ENCODE measurements at regions of chr22 and their contacts with region 1.

Region 1: GRCh38 chr22:35349704-35350538 is 31.0 kb upstream of the HMOX1 start:
- DNase-seq: no peak
- H3K4me3 ChIP-seq: peak overlapping the region in 1 of 4 donors; percentile 72
- H3K27ac ChIP-seq: peak overlapping the region; percentile 61 to 86 (median 72)
- H3K4me1 ChIP-seq: peaks cover 18 to 42% (median 27%) of the 10 kb centered on the region in 3 donors
- H3K27me3 ChIP-seq: no peaks in the 10 kb centered on the region
- CTCF ChIP-seq: no peak
- POLR2A ChIP-seq: no peak

Region 2: DNA sequence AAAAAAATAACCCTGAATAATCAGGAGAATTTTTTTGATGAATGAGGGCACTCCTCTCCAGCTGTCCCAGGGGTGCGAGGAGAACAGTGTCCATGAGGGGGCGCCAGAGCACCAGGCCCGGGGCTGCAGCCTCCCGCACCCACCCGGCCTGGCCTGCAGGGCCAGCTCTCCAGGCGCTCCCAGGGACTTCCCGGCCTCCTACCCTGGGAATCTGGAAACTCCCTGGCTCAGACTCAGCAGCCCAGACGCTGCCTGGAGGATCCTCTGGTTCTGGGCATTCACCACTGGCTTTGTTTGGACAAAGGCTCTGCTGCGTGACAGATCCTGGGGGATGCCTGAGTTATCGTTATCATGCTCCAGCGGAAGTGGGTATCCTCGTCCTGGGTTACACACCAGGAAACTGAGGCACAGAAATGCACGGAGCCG is 81.0 kb after region 1 on chr22:
- intact Hi-C with region 1: loop called (anchors 10 kb)
- DNase-seq: no peak
- H3K4me3 ChIP-seq: peak overlapping the region in 1 of 4 donors; percentile 19
- H3K27ac ChIP-seq: peak overlapping the region; percentile 18 to 44 (median 28)
- H3K4me1 ChIP-seq: peaks cover 0 to 15% (median 4%) of the 10 kb centered on the region in 3 donors
- H3K27me3 ChIP-seq: no peaks in the 10 kb centered on the region
- CTCF ChIP-seq: peak; percentile 79 to 99 (median 97)
- POLR2A ChIP-seq: no peak

Region 3: GRCh38 chr22:35467681-35468434 is 117.9 kb after region 1 on chr22:
- intact Hi-C with region 1: no loop called
- DNase-seq: no peak
- H3K4me3 ChIP-seq: no peak overlapping the region
- H3K27ac ChIP-seq: peak overlapping the region; percentile 47 to 80 (median 72)
- H3K4me1 ChIP-seq: peaks cover 12 to 24% (median 16%) of the 10 kb centered on the region in 3 donors
- H3K27me3 ChIP-seq: no peaks in the 10 kb centered on the region
- CTCF ChIP-seq: no peak
- POLR2A ChIP-seq: no peak

Region 4: DNA sequence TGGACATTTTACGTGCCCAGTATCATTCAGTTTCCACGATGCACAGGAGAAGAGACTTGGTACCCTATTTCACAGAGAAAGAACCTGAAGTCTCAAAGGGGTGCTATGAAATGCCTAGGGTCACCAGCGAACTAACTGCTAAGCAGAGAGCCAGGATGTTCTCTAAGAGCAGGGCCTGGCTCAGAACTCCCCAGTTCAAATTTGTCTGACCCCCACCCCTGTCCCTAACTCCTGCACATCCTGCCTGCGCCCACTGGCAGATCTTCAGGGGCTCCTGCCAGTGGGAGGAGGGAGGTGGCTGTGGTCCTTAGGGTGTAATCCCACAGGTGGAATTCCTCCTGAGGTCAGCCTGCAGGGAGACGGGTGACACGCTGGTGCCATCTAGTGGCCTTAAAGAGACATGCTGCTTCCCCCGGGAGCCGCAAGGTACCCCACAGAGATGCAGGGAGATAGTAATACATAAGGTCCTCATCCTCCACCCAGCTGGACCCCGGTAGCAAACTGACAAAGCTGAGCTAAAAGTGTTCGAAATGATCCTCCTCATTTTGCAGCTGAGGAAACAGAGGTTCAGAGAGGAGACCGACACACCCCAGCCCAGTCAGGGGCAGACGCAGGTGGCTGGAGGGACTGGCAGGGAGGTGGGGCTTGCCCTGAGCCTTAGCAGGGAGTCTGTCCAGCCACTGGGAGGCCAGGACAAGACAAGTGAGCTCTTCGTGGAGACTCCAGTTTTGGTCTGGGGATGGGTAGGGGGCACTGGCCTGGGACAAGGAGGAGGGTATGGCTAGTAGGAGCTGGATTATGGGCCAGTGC is 233.1 kb after region 1 on chr22:
- intact Hi-C with region 1: loop called (anchors 10 kb)
- DNase-seq: no peak
- H3K4me3 ChIP-seq: no peak overlapping the region
- H3K27ac ChIP-seq: peak overlapping the region in 2 of 4 donors; percentile 3 to 44
- H3K4me1 ChIP-seq: peaks cover 0 to 10% (median 8%) of the 10 kb centered on the region in 3 donors
- H3K27me3 ChIP-seq: no peaks in the 10 kb centered on the region
- CTCF ChIP-seq: peak; percentile 80 to 94 (median 88)
- POLR2A ChIP-seq: no peak

Region 5: DNA sequence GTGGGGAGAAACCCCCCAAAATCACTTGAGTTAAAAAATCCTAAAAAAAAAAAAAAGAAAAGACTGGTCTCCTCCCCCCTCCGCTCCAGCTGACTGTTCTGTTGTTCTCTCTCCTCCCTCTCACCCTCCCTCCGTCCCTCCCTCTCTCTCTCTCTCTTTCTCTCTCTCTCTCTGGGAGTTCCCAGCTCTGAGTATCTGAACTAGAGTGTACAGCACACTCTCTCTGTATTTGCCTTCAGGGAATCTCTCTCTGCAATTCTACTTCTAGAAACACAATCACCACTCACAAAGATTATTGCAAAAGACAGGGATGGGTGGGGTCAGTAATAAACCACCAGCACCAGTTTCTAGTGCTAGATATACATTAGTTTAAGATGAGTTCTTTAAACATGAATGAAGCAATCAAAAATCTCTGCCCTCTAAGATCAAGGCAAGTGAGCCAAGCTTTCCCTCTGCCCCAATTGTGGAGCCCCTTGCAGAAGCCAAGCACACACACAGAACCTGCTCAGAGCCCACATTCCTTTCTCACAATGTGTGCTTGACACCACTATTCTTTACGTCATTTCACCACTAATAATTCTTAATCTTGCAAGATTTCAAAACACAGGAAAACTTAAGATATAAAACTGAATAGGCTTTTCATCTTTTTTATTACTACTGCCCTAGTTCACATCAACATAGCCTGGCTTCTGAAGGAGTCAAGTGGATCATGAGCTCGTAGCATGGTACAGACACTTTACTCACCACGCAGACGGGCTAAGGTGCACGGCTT is 545.2 kb after region 1 on chr22:
- intact Hi-C with region 1: no loop called
- DNase-seq: no peak
- H3K4me3 ChIP-seq: peak overlapping the region; percentile 12 to 56 (median 42)
- H3K27ac ChIP-seq: peak overlapping the region; percentile 78 to 90 (median 89)
- H3K4me1 ChIP-seq: peaks cover 26 to 76% (median 48%) of the 10 kb centered on the region in 3 donors
- H3K27me3 ChIP-seq: no peaks in the 10 kb centered on the region
- CTCF ChIP-seq: no peak
- POLR2A ChIP-seq: no peak

Region 6: DNA sequence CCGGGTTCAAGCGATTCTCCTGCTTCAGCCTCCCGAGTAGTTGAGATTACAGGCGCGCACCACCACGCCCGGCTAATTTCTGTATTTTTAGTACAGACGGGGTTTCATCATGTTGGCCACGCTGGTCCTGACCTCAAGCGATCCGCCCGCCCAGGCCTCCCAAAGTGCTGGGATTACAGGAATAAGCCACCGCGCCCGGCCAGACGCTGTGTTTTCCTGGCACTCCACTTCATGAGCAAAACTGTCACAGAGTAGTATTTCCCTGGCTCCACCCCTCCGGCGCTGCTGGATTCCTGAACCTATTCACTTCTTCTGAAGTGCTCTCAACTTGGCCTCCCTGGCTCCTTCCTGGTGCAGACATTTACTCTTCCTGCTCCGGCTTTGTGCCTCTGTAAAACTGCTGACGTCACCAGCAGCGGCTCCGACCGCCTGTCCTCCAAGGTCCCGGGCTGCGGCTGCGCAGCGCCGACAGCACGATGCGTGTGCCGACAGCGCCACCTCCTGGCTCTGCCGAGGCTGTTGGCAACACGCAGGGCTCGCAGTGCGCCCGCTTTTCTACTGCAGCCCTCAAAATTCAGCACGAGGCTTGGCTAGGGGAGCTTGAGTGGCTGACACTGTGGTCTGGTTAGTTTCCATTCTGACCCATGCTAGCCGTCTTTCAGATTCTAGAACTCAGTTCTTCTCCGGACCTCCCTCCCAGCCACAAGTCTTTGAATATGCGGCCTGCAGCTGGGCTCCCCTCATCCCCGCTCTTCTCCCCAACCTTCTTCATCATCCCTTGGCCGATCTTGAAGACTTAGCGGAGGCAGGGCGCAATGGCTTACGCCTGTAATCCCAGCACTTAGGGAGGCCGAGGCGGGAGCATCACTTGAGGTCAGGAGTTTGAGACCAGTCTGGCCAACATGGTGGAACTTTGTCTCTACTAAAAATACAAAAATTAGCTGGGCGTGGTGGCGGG is 774.0 kb after region 1 on chr22:
- intact Hi-C with region 1: loop called (anchors 5 kb)
- DNase-seq: peak; percentile 59
- H3K4me3 ChIP-seq: peak overlapping the region in 3 of 4 donors; percentile 36 to 53 (median 36)
- H3K27ac ChIP-seq: peak overlapping the region; percentile 77 to 92 (median 84)
- H3K4me1 ChIP-seq: peaks cover 0 to 14% (median 3%) of the 10 kb centered on the region in 3 donors
- H3K27me3 ChIP-seq: peaks cover 0 to 21% (median 0%) of the 10 kb centered on the region in 4 donors
- CTCF ChIP-seq: peak; percentile 93 to 100 (median 99)
- POLR2A ChIP-seq: peak in 1 of 4 donors; percentile 61